Caco-2 (cell line): ENCODE measurements at regions of chr5 and their contacts with region 1.

Region 1: GRCh38 chr5:142151436-142152383 is 43.1 kb downstream of the NDFIP1 start:
- DNase-seq: peak in 1 of 2 experiments; percentile 65
- H3K4me3 ChIP-seq: no peak overlapping the region
- H3K4me3 Mint-ChIP-seq: no peak overlapping the region
- H3K27ac Mint-ChIP-seq: no peak overlapping the region
- H3K4me1 ChIP-seq: peaks cover 4% of the 10 kb centered on the region; the same call in 1 of the 2 replicates
- H3K4me1 Mint-ChIP-seq: no peaks in the 10 kb centered on the region
- H3K27me3 ChIP-seq: no peaks in the 10 kb centered on the region
- H3K27me3 Mint-ChIP-seq: no peaks in the 10 kb centered on the region
- CTCF ChIP-seq: peak; percentile 83 to 87

Region 2: DNA sequence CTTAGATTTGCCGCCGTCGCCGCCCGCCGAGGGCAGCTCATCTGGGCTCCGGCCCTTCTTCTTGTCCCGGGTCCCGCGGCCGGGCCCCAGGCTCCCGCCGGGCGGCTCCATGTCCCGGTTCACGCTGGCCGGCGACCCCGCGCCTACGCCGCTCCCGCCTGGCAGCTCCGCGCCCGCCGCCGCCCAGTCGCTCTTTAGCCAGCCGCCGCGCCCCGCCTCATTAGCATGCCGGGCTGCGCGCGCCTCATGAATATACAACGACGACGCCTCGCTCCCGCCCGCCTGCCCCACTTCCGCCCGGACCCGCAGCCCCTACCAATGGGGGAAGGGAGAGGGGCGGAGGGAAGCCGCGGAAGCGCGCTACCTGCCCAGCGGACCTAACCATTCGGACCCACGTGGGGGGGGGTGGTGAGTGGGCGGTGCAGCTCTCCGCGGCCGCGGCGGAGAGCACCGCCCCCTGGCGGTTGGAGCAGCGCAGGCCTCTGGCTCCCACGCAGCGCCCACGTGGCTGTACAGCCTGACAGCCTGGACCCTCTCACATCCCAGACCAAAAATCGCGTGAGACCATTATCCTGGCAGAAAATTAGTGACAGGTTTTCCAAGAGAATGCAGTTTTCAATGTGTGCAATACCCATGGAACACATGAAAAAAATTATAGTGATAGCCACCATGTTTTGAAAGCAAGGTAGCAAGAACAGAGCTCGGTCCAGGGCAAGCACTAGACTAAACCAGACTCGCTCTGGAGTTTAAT is 532.7 kb before region 1 on chr5 and contains the start of gene DIAPH1:
- CTCF ChIA-PET with region 1: no interaction called
- POLR2A ChIA-PET with region 1: no interaction called
- intact Hi-C with region 1: no loop called
- DNase-seq: peak; percentile 98
- H3K4me3 ChIP-seq: peak within 1 kb of the TSS; percentile 87
- H3K4me3 Mint-ChIP-seq: peak within 1 kb of the TSS; percentile 89
- H3K27ac Mint-ChIP-seq: peak within 1 kb of the TSS; percentile 96
- H3K4me1 ChIP-seq: peaks cover 29% of the 10 kb centered on the region
- H3K4me1 Mint-ChIP-seq: peaks cover 13% of the 10 kb centered on the region
- H3K27me3 ChIP-seq: no peaks in the 10 kb centered on the region
- H3K27me3 Mint-ChIP-seq: no peaks in the 10 kb centered on the region
- CTCF ChIP-seq: peak; percentile 95 to 97
- total RNA-seq, gene DIAPH1: 161 and 167 TPM in 2 replicates

Region 3: DNA sequence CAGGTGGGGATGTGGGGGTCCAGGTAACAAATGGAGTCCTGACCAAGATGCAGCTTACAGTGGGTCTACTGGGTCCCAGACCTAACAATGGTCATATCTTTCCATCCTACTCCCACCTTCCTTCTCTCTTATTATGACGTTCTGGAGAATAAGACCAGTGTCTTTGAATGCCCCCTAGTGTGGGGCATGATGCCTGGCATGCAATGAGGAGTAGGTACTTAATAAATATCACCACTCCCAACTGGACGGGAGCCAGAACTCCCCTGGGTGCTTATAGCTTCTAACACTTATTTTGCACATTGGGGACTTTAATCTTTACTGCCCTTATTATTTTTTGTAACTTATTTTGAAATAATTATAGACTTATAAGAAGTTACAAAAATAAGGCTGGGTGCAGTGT is 55.1 kb after region 1 on chr5:
- CTCF ChIA-PET with region 1: no interaction called
- POLR2A ChIA-PET with region 1: no interaction called
- intact Hi-C with region 1: loop called (anchors 2 kb)
- DNase-seq: no peak
- H3K4me3 ChIP-seq: no peak overlapping the region
- H3K4me3 Mint-ChIP-seq: no peak overlapping the region
- H3K27ac Mint-ChIP-seq: no peak overlapping the region
- H3K4me1 ChIP-seq: no peaks in the 10 kb centered on the region
- H3K4me1 Mint-ChIP-seq: no peaks in the 10 kb centered on the region
- H3K27me3 ChIP-seq: no peaks in the 10 kb centered on the region
- H3K27me3 Mint-ChIP-seq: no peaks in the 10 kb centered on the region
- CTCF ChIP-seq: no peak

Region 4: GRCh38 chr5:142324871-142325724 is 173.4 kb after region 1 on chr5 and contains the start of gene SPRY4:
- CTCF ChIA-PET with region 1: no interaction called
- POLR2A ChIA-PET with region 1: no interaction called
- intact Hi-C with region 1: loop called (anchors 5 kb)
- DNase-seq: peak; percentile 97 to 98
- H3K4me3 ChIP-seq: peak within 1 kb of the TSS; percentile 83
- H3K4me3 Mint-ChIP-seq: peak within 1 kb of the TSS; percentile 89
- H3K27ac Mint-ChIP-seq: peak within 1 kb of the TSS; percentile 86
- H3K4me1 ChIP-seq: peaks cover 39% of the 10 kb centered on the region
- H3K4me1 Mint-ChIP-seq: peaks cover 41% of the 10 kb centered on the region
- H3K27me3 ChIP-seq: no peaks in the 10 kb centered on the region
- H3K27me3 Mint-ChIP-seq: no peaks in the 10 kb centered on the region
- CTCF ChIP-seq: peak in 1 of 2 experiments; percentile 17
- total RNA-seq, gene SPRY4: 7.7 and 8.3 TPM in 2 replicates

Region 5: DNA sequence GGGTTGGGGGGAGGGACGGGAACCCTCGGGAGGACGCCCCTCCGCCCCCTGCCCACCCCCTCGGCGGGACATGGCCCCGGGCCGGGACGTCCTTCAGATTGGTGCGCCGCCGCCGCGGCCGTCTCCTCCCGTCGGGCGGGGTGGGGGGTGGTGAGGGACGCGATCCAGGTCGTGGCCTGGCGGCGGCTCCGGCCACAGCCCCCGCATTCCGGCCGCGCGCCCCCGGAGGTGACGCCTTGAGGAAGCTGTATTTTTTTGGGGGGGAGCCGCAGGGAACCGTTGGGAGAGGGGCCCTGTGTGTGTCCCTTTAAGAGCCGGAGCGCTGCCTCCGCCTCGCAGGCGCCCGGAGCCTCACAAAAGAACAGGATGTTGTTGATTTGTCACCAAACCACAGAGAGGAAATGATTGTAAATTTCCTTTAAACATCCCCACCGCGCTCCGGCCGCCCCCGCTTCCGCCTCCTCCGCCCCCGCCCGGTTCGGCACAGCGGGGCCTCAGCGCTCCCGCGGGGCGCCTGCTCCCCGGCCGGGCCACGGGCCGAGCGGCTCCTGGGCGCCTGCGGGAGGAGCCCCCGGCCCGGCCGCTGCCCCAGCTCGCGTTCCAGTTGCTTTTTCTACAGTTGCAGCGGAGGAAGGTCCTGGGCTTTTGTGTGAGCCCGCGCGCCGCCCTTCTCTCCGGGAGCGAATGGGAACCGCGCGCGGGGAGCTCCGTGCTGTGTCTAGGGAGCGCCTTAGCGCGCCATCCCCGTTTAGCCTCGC is 205.2 kb after region 1 on chr5:
- CTCF ChIA-PET with region 1: no interaction called
- POLR2A ChIA-PET with region 1: interaction called, 9 read pairs
- intact Hi-C with region 1: loop called (anchors 1 kb)
- DNase-seq: peak; percentile 71 to 73
- H3K4me3 ChIP-seq: peak overlapping the region; percentile 76
- H3K4me3 Mint-ChIP-seq: peak overlapping the region; percentile 71
- H3K27ac Mint-ChIP-seq: peak overlapping the region; percentile 32
- H3K4me1 ChIP-seq: peaks cover 28% of the 10 kb centered on the region
- H3K4me1 Mint-ChIP-seq: peaks cover 15% of the 10 kb centered on the region
- H3K27me3 ChIP-seq: no peaks in the 10 kb centered on the region
- H3K27me3 Mint-ChIP-seq: no peaks in the 10 kb centered on the region
- CTCF ChIP-seq: no peak

Region 6: GRCh38 chr5:142390334-142390733 is 238.6 kb after region 1 on chr5:
- CTCF ChIA-PET with region 1: interaction called, 10 read pairs
- POLR2A ChIA-PET with region 1: no interaction called
- intact Hi-C with region 1: no loop called
- DNase-seq: no peak
- H3K4me3 ChIP-seq: no peak overlapping the region
- H3K4me3 Mint-ChIP-seq: no peak overlapping the region
- H3K27ac Mint-ChIP-seq: no peak overlapping the region
- H3K4me1 ChIP-seq: no peaks in the 10 kb centered on the region
- H3K4me1 Mint-ChIP-seq: peaks cover 26% of the 10 kb centered on the region
- H3K27me3 ChIP-seq: no peaks in the 10 kb centered on the region
- H3K27me3 Mint-ChIP-seq: peaks cover 2% of the 10 kb centered on the region
- CTCF ChIP-seq: no peak

Region 7: DNA sequence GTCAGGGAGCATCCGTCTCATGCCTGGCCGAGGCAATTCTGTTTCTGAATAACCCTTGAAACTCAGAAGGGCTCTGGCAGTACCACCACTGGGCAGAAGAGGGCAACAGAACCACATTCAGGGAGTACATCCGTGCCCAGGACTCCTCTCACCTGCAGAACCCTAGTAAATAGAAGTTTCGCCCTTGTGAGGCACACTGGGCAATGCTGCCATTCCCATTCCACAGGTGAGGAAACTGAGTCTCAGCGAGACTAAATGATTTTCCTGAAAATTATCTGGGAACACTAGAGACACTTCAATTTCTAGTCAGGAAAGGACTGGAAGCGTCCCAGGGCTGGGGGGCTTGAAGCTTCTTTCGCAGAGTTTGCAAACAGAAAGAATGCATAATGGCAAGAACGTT is 459.4 kb after region 1 on chr5:
- CTCF ChIA-PET with region 1: no interaction called
- POLR2A ChIA-PET with region 1: no interaction called
- intact Hi-C with region 1: loop called (anchors 1 kb)
- DNase-seq: peak; percentile 73 to 78
- H3K4me3 ChIP-seq: no peak overlapping the region
- H3K4me3 Mint-ChIP-seq: no peak overlapping the region
- H3K27ac Mint-ChIP-seq: no peak overlapping the region
- H3K4me1 ChIP-seq: no peaks in the 10 kb centered on the region
- H3K4me1 Mint-ChIP-seq: no peaks in the 10 kb centered on the region
- H3K27me3 ChIP-seq: no peaks in the 10 kb centered on the region
- H3K27me3 Mint-ChIP-seq: peaks cover 12% of the 10 kb centered on the region
- CTCF ChIP-seq: peak; percentile 85 to 94

Region 8: GRCh38 chr5:142699184-142699720 is 547.5 kb after region 1 on chr5:
- CTCF ChIA-PET with region 1: no interaction called
- POLR2A ChIA-PET with region 1: no interaction called
- intact Hi-C with region 1: loop called (anchors 5 kb)
- DNase-seq: peak; percentile 84 to 90
- H3K4me3 ChIP-seq: no peak overlapping the region
- H3K4me3 Mint-ChIP-seq: no peak overlapping the region
- H3K27ac Mint-ChIP-seq: no peak overlapping the region
- H3K4me1 ChIP-seq: no peaks in the 10 kb centered on the region
- H3K4me1 Mint-ChIP-seq: no peaks in the 10 kb centered on the region
- H3K27me3 ChIP-seq: no peaks in the 10 kb centered on the region; the same call in none of the 2 replicates
- H3K27me3 Mint-ChIP-seq: peaks cover 7% of the 10 kb centered on the region
- CTCF ChIP-seq: peak; percentile 93 to 97